AG04450 (cell line): ENCODE measurements at regions of chr10 and their contacts with region 1.

Region 1: GRCh38 chr10:60444494-60445064 is 54.9 kb upstream of the ANK3 start:
- DNase-seq: no peak
- H3K4me3 ChIP-seq: no peak overlapping the region
- H3K27ac ChIP-seq: no peak overlapping the region
- H3K27me3 ChIP-seq: peaks cover 2% of the 10 kb centered on the region
- CTCF ChIP-seq: peak; percentile 66

Region 2: DNA sequence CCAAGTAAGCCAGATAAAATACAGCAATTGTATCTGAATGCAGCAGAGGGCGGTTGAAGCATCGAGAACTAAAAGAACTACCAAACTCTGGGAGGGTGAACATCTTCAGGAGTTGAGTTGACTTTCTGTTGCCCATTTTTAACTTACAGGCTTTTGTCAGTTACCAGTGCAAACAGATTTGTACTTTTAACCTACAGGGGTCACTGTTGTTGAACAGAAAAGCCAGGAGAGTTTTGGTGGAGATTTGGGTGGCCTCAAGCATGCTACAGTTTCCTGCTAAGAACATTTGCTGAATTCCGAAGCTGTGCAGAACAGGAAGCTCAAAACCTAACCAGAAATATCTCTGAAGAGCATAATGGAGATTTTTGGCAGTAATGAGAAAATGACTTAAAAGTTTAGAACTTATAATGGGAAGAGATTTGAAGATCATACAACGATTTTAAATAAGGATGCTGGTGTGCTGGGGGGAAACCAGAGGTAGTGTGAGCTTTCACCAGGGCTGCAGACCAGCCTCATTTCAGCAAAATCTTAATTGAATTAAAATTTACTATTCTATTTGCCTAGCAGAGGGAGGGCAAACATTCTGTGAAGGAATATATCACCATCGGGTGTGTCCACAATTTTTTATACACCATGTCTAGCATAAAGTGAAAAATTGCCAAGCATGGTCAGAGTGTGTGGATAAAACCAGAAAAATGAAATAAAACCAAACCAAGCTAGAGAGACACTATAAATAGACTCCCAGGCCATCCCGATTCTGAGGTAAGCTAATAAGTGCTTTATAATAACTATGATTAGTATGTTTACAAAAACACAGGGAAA is 329.6 kb before region 1 on chr10:
- CTCF ChIA-PET with region 1: interaction called, 15 read pairs
- POLR2A ChIA-PET with region 1: no interaction called
- DNase-seq: peak; percentile 43
- H3K4me3 ChIP-seq: no peak overlapping the region
- H3K27ac ChIP-seq: no peak overlapping the region
- H3K27me3 ChIP-seq: no peaks in the 10 kb centered on the region
- CTCF ChIP-seq: peak; percentile 69

Region 3: GRCh38 chr10:60237977-60238758 is 206.4 kb before region 1 on chr10:
- CTCF ChIA-PET with region 1: interaction called, 12 read pairs
- POLR2A ChIA-PET with region 1: no interaction called
- DNase-seq: peak; percentile 30
- H3K4me3 ChIP-seq: peak overlapping the region; percentile 21
- H3K27ac ChIP-seq: no peak overlapping the region
- H3K27me3 ChIP-seq: no peaks in the 10 kb centered on the region
- CTCF ChIP-seq: peak; percentile 63

Region 4: DNA sequence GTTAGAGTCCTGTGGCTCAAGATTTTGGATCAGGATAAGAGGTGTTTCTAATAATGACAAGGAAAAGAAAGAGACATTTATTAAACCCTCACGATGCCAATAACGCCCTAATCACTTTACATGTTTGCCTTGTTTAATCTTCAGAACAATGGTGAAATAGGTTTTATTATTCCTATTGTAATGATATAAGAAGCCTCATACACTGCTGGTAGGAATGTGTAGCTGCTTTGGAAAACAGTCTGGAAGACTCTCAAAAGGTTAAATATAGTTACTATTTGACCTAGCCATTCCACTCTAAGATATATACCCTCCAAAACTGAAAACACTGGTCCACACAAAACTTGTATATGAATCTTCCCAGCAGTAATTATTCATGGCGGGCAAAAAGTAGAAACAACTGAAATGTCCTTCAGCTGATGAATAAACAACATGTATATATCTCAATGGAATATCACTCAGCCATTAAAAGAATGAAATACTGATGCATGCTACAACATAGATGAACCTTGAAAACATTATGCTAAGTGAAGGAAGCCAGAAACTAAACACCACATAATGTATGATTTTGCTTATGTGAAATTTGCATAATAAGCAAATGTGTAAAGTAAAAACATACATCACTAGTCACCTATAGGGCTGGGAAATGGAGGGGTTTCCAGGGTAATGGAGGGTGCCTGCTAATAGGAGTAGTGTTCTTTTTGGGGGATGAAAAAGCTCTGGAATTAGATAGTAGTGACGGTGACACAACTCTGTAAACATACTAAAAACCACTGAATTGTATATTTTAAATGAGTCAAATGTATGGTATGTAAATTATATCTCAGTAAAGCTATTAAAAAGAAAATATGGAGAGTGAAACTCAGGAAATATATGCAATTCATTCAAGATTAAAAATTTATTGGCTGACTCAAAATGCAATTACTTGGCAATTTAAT is 22.0 kb after region 1 on chr10:
- CTCF ChIA-PET with region 1: interaction called, 11 read pairs
- POLR2A ChIA-PET with region 1: no interaction called
- DNase-seq: peak; percentile 11
- H3K4me3 ChIP-seq: no peak overlapping the region; the same call in 1 of the 2 replicates
- H3K27ac ChIP-seq: no peak overlapping the region
- H3K27me3 ChIP-seq: no peaks in the 10 kb centered on the region
- CTCF ChIP-seq: peak; percentile 32; the same call in 1 of the 2 replicates

Region 5: GRCh38 chr10:60618861-60619260 is 174.3 kb after region 1 on chr10:
- CTCF ChIA-PET with region 1: interaction called, 15 read pairs
- POLR2A ChIA-PET with region 1: no interaction called
- DNase-seq: no peak
- H3K4me3 ChIP-seq: no peak overlapping the region
- H3K27ac ChIP-seq: no peak overlapping the region
- H3K27me3 ChIP-seq: no peaks in the 10 kb centered on the region
- CTCF ChIP-seq: no peak

Region 6: DNA sequence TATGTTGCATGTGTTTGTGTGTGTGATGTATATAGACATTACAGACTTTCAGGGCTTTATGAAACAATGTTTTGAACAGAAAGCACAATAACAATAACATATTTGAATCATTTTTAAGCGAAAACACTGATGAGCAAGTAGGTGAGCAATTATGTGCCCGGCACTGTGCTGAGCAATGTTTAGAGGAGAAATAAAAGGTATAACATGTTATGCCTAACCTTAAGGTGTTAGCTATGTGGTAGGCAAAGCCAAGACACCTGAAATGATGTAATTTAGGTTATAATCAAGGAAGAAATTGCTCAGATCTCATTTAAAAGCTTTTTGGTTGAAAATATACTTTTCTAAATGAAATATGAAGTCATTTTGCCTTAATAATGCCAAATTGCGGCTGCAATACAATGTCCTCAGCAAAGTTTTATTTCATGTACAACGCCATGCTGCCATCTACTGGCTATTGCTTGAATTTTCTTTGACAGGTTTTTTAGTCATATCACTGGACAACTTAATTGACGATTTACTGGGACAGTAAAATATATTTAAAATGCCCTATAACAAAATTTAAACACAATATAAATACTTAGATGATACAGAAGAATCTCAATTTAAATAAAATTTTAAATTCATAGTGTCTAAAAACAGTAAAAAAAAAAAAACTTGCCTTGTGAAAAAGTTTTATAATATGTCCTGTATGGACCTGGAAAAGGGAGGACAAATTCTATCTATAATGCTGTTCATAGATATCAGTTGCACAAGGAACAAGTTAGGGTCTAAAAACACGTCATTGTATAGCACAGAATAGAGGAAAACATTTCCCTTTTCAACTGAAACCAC is 202.6 kb after region 1 on chr10:
- CTCF ChIA-PET with region 1: interaction called, 307 read pairs
- POLR2A ChIA-PET with region 1: no interaction called
- DNase-seq: peak; percentile 38
- H3K4me3 ChIP-seq: no peak overlapping the region
- H3K27ac ChIP-seq: no peak overlapping the region
- H3K27me3 ChIP-seq: no peaks in the 10 kb centered on the region
- CTCF ChIP-seq: peak; percentile 69

Region 7: GRCh38 chr10:60769406-60769805 is 324.8 kb after region 1 on chr10:
- CTCF ChIA-PET with region 1: interaction called, 42 read pairs
- POLR2A ChIA-PET with region 1: no interaction called
- DNase-seq: no peak
- H3K4me3 ChIP-seq: no peak overlapping the region
- H3K27ac ChIP-seq: no peak overlapping the region
- H3K27me3 ChIP-seq: peaks cover 2% of the 10 kb centered on the region
- CTCF ChIP-seq: no peak